ENCODE measurements at regions of chr11 and their contacts with region 1.

Region 1: GRCh38 chr11:17014838-17015626 is 818 bp upstream of the PLEKHA7 start:
- DNase-seq: peak; percentile 21 to 26
- H3K4me3 ChIP-seq: peak overlapping the region; percentile 28 to 90 (median 49)
- H3K27ac ChIP-seq: no peak overlapping the region
- H3K4me1 ChIP-seq: no peaks in the 10 kb centered on the region
- H3K27me3 ChIP-seq: no peaks in the 10 kb centered on the region
- CTCF ChIP-seq: peak in 5 of 6 experiments; percentile 18 to 51 (median 40)
- POLR2A ChIP-seq: no peak

Region 2: DNA sequence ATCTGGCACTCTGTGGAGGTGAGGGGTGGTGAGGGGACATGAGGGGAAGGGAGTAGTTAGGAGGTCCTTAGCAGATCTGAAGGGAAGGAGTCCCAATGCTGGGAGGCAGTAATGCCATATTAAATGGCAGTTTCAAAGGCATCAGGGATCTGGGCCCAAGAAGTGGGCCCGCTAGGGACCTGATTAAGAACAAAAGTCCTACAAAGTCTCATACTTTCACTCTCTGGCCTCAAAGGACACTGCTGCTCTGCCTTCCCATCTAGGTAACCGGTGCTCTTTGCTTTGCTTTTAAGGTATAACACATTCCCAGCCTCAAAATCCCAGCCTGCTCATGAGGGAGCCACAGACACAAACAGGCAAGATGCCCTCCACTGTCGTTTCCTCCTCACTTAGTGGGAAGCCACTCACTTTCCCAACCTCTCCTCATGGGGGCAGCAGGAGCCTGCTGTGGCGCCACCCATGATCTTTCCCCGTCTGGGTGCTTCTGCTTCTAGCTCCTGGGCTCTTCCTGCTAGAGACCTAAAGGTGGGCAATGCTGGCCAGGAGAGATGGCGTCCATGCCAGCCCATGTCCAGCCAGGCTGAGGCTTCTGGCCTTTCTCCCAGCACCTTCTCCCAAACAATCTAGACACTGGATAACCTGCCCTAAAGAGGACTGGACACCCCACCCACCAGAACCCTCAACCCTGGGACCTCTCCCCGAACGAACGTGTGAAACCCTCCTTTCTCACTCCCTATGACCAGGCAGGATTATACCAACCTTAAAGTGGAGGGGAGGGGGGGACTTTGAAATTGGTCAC is 69.2 kb before region 1 on chr11:
- intact Hi-C with region 1: loop called (anchors 10 kb)
- DNase-seq: peak; percentile 77 to 79
- H3K4me3 ChIP-seq: no peak overlapping the region
- H3K27ac ChIP-seq: peak overlapping the region; percentile 32 to 71 (median 47)
- H3K4me1 ChIP-seq: peaks cover 6 to 11% of the 10 kb centered on the region in 2 donors
- H3K27me3 ChIP-seq: no peaks in the 10 kb centered on the region
- CTCF ChIP-seq: peak; percentile 36 to 90 (median 84)
- POLR2A ChIP-seq: no peak

Region 3: DNA sequence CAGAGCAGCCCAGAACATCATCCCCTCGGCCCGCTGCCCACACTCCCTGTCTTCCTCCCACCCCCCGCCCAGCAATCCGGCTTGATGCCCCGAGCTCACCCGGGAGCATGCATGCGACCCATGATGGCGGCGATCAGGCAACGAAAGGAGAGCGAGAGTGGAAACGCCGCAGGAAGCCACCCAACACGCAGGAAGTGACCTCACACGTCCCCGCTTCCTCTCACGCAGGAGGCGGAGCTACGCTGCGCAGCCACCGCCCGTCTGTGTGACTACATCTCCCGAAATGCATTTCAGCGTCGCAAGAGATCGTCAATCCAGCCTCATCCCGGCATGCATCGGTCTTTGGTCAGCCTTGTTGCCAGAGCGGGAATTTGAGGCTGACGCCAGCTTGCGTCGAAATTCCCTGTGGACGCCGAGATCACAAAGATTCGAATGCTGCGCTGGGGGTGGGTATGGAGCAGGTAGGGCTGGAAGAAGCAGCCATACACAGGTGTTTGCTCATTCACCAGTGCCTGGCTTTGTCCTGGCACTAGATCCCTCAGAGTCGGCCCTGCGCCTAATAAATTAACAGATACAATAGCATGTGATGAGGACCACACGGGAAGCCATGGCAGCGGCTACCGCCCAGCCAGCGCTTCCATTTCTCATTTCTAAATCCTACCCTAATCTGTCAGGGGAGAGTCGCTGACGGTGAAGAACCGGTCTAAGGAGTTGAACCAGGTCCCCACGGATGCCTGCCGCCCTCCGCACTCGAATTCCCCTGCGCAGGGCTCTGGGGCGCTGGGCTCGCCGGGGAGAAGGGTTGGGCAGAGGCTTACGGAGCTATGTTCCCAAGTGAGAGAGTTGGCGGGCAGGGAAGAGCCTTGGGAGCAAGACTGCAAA is 62.7 kb after region 1 on chr11 and contains the start of gene RPS13:
- intact Hi-C with region 1: loop called (anchors 10 kb)
- DNase-seq: peak; percentile 97
- H3K4me3 ChIP-seq: peak within 1 kb of the TSS; percentile 59 to 83 (median 82)
- H3K27ac ChIP-seq: peak within 1 kb of the TSS; percentile 64 to 95 (median 85)
- H3K4me1 ChIP-seq: peaks cover 19 to 21% of the 10 kb centered on the region in 2 donors
- H3K27me3 ChIP-seq: no peaks in the 10 kb centered on the region
- CTCF ChIP-seq: no peak
- POLR2A ChIP-seq: peak in 1 of 2 donors; percentile 88
- total RNA-seq, gene RPS13: 543 to 1,614 (median 1,223) TPM